ENCODE measurements at regions of chr20 and their contacts with region 1.

Region 1: GRCh38 chr20:740141-740540 is 28.2 kb downstream of the SLC52A3 start:
- DNase-seq: peak in 1 of 2 experiments; percentile 47
- H3K4me3 ChIP-seq: no peak overlapping the region
- H3K27ac ChIP-seq: no peak overlapping the region
- H3K4me1 ChIP-seq: peaks cover 16% of the 10 kb centered on the region
- H3K27me3 ChIP-seq: no peaks in the 10 kb centered on the region
- CTCF ChIP-seq: no peak

Region 2: DNA sequence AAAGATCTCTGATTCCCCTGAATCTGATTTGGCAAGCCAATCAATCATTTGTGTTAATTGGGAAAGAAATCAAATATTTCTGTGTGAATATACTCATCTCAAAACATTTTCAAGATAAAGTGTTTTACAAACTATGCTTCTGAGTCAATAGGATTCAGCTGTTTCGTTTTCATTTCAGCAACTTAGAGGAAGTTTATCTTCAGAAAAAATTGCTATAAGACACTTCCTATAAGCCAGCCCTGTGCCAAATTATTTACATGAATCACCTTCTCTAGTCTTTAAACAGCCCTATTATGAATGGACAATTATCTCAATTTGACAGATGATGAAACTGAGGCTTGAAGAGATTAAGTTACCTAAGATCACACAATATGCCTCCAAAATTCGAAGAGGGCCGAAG is 502.2 kb before region 1 on chr20:
- CTCF ChIA-PET with region 1: interaction called, 10 read pairs
- POLR2A ChIA-PET with region 1: no interaction called
- intact Hi-C with region 1: no loop called
- DNase-seq: no peak
- H3K4me3 ChIP-seq: no peak overlapping the region
- H3K27ac ChIP-seq: no peak overlapping the region
- H3K4me1 ChIP-seq: no peaks in the 10 kb centered on the region
- H3K27me3 ChIP-seq: peaks cover 50% of the 10 kb centered on the region
- CTCF ChIP-seq: no peak

Region 3: GRCh38 chr20:354298-355064 is 385.7 kb before region 1 on chr20:
- CTCF ChIA-PET with region 1: no interaction called
- POLR2A ChIA-PET with region 1: no interaction called
- intact Hi-C with region 1: loop called (anchors 5 kb)
- DNase-seq: peak; percentile 59 to 80
- H3K4me3 ChIP-seq: no peak overlapping the region
- H3K27ac ChIP-seq: no peak overlapping the region
- H3K4me1 ChIP-seq: no peaks in the 10 kb centered on the region
- H3K27me3 ChIP-seq: no peaks in the 10 kb centered on the region
- CTCF ChIP-seq: peak; percentile 96

Region 4: DNA sequence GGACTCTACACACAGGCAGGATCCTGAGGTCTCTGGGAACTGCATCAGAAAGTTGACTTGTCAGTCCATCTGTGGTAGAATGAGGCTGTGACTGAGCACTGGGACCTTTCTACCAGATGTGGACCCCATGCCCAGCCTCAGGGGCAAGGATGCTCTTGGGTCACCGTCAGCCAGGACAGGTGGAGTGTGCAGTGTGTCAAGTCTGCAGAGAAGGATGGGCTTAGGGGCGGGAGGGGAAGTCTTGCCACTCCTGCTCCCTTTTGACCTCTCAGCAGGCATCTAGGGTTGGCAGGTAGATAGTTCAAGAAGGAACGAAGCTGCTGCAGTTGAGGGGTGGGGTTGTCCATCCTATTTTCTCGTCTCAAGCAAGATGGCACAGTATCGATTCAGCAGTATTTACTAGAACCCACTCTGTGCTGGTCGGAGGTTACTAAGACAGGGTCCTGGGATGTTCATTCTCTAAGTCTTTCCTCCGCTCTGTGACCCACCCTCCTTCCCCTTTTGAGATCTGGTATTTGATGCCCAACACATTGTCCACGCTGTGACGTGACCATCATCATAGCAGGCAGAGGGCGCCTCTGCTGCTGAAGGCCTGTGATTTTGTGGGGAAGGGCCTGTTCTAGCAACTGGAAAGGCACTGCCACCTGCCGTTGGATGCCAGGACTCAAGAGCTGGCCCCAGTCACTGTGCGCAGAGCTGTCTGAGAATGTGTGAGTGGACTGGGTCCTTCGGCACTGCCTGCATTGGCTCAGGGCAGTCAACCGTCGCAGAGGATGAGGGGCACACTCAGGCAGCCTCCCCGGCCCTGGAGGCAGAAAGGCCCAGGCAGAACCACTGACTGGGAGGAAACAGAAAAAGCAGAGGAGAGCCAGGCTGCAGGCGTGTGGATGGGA is 308.9 kb before region 1 on chr20:
- CTCF ChIA-PET with region 1: no interaction called
- POLR2A ChIA-PET with region 1: no interaction called
- intact Hi-C with region 1: loop called (anchors 5 kb)
- DNase-seq: peak; percentile 67 to 75
- H3K4me3 ChIP-seq: no peak overlapping the region
- H3K27ac ChIP-seq: no peak overlapping the region
- H3K4me1 ChIP-seq: no peaks in the 10 kb centered on the region
- H3K27me3 ChIP-seq: no peaks in the 10 kb centered on the region
- CTCF ChIP-seq: peak; percentile 80

Region 5: GRCh38 chr20:653110-653589 is 87.0 kb before region 1 on chr20 and contains the start of gene SRXN1:
- CTCF ChIA-PET with region 1: no interaction called
- POLR2A ChIA-PET with region 1: no interaction called
- intact Hi-C with region 1: loop called (anchors 5 kb)
- DNase-seq: peak; percentile 76 to 94
- H3K4me3 ChIP-seq: peak within 1 kb of the TSS; percentile 94
- H3K27ac ChIP-seq: peak within 1 kb of the TSS; percentile 86
- H3K4me1 ChIP-seq: peaks cover 25% of the 10 kb centered on the region
- H3K27me3 ChIP-seq: no peaks in the 10 kb centered on the region
- CTCF ChIP-seq: peak; percentile 46; the same call in 1 of the 2 replicates
- total RNA-seq, gene SRXN1: 167 and 204 TPM in 2 replicates

Region 6: DNA sequence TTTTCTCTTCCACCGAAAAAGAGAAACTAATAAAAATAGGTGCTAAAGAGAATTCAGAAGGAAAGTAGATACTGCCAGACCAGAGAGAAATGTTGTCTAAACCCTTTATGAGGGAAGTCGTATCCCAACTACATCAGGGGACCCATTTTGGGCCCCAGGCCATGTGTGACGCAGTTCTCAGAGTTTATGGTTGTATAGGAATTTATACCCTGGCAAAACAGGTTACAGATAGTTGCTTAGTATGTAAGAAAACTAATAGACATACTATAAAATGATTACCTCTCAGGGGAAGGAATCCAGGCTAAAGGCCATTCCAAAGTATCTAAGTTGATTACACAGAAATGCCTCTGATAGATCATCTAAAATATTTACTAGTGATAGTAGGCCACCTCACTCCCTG is 56.8 kb after region 1 on chr20:
- CTCF ChIA-PET with region 1: no interaction called
- POLR2A ChIA-PET with region 1: no interaction called
- intact Hi-C with region 1: no loop called
- DNase-seq: no peak
- H3K4me3 ChIP-seq: no peak overlapping the region
- H3K27ac ChIP-seq: no peak overlapping the region
- H3K4me1 ChIP-seq: no peaks in the 10 kb centered on the region
- H3K27me3 ChIP-seq: peaks cover 41% of the 10 kb centered on the region
- CTCF ChIP-seq: no peak

Measured in PC-9 (cell line).